Ovary (tissue), 10 donors: ENCODE measurements at regions of chr19 and their contacts with region 1.

Region 1: DNA sequence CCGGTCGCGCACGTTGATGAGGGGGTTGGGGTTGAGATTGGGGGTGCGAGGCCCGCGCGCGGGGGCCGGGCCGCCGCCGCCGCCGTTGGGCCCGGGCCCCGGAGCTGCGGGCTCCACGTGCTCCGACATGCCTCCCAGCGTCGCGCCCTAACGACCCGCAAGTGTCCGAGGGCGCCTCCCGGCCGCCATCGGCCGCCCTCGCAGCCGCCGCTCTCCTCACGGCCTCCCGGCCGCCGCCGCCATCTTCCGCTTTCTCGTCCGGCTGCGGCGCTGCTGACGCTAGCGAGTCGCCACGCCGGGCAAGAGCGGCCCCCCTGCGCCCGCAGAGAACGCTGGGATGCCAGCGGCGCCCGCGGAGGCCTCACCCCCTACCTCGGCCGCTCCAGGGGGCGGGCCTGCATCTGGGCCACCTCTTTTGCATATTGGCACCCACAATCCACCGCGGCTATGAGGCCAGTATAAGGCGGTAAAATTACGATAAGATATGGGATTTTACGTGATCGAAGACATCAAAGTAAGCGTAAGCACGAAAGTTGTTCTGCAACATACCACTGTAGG is at the start of gene TMEM259:
- DNase-seq: peak; percentile 96 to 98 (median 98)
- H3K4me3 ChIP-seq: peak within 1 kb of the TSS; percentile 97
- H3K27ac ChIP-seq: peak within 1 kb of the TSS; percentile 90 to 96
- H3K4me1 ChIP-seq: peaks cover 32% of the 10 kb centered on the region
- H3K27me3 ChIP-seq: no peaks in the 10 kb centered on the region
- CTCF ChIP-seq: no peak
- EP300 ChIP-seq: no peak
- POLR2A ChIP-seq: peak; percentile 42
- total RNA-seq, gene TMEM259: 105 to 196 (median 127) TPM

Region 2: GRCh38 chr19:1094975-1095701 is 74.2 kb after region 1 on chr19 and contains the start of gene POLR2E:
- intact Hi-C with region 1: loop called in 3 of 4 experiments (anchors 5 kb)
- DNase-seq: peak; percentile 99
- H3K4me3 ChIP-seq: peak within 1 kb of the TSS; percentile 77
- H3K27ac ChIP-seq: peak within 1 kb of the TSS in 1 of 2 donors; percentile 58
- H3K4me1 ChIP-seq: peaks cover 12% of the 10 kb centered on the region
- H3K27me3 ChIP-seq: no peaks in the 10 kb centered on the region
- CTCF ChIP-seq: no peak
- EP300 ChIP-seq: no peak
- POLR2A ChIP-seq: peak; percentile 64
- total RNA-seq, gene POLR2E: 88.2 to 157 (median 140) TPM

Region 3: GRCh38 chr19:1103708-1104310 is 82.9 kb after region 1 on chr19 and contains the start of gene GPX4:
- intact Hi-C with region 1: loop called in 3 of 4 experiments (anchors 5 kb)
- DNase-seq: peak; percentile 99
- H3K4me3 ChIP-seq: peak within 1 kb of the TSS; percentile 84
- H3K27ac ChIP-seq: peak within 1 kb of the TSS; percentile 91 to 97
- H3K4me1 ChIP-seq: peaks cover 27% of the 10 kb centered on the region
- H3K27me3 ChIP-seq: no peaks in the 10 kb centered on the region
- CTCF ChIP-seq: no peak
- EP300 ChIP-seq: no peak
- POLR2A ChIP-seq: peak; percentile 78
- total RNA-seq, gene GPX4: 189 to 309 (median 247) TPM

Region 4: DNA sequence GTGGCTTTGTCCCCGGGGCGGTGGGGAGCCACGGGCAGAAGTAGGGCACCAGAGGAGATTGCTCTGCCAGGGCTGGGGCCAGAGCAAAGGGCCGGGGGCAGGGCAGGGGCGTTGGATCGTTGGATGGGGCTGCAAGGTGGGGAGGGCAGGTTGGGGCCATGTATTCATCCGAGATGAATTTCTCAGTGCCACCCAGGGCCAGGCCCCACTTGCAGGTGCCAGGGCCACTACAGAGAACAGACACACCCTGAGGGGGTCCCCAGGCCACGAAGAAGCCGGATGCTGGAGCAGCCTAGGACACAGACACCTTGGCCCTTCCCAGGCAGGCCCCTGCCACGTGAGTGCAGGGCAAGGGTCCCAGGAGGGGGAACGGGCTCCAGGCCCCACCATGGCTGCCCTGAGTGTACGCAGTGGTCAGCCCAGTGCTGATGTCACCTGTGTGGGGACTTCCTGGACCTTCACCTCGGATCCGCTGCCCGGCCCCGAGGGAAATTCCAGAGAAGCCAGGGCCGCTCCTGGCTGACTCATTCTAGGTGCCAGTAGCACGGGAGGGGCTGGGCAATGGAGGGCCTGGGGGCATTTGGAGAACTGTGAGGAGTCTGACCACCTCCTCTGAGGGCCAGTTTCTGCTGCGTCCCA is 162.7 kb after region 1 on chr19:
- intact Hi-C with region 1: loop called in 2 of 4 experiments (anchors 10 kb)
- DNase-seq: peak in 2 of 5 donors; percentile 19 to 35
- H3K4me3 ChIP-seq: no peak overlapping the region
- H3K27ac ChIP-seq: no peak overlapping the region
- H3K4me1 ChIP-seq: no peaks in the 10 kb centered on the region
- H3K27me3 ChIP-seq: no peaks in the 10 kb centered on the region
- CTCF ChIP-seq: no peak
- EP300 ChIP-seq: no peak
- POLR2A ChIP-seq: no peak

Region 5: DNA sequence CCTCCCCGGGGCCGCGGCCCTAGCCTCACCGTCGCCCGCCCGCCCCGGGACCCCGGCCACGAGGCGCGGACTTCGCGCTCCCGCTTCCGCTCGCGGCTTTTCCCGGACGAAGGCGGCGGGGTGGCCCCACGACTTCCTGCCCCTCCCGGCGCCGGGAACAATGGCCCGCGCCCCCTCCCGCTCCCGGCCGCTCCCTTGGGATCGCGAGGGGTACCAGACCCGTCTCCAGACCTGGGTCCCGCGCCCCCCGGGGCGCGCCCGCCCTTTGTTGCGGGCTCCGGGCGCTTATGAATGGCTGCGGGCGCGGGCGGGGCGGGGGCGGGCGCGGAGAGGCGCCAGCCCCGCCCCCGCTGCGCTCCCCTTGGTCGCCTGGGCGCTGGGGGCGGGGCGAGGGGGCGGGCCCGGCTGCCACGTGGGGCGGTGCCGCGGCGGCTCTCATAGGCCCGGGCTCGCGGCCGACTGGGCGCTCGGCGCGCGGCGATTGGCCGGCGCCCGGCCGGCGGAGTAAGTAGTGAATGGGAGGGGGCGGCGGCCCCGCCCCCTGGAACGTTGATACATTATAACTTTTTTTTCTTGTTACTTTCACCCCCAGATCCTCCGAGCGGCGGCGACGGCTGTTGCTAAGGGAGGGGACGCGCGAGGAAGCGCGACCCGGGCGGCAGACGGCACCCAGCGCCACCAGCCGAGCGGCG is 228.5 kb after region 1 on chr19:
- intact Hi-C with region 1: loop called in 1 of 4 experiments (anchors 10 kb)
- DNase-seq: peak; percentile 91 to 96 (median 94)
- H3K4me3 ChIP-seq: peak overlapping the region; percentile 77
- H3K27ac ChIP-seq: peak overlapping the region; percentile 99
- H3K4me1 ChIP-seq: peaks cover 33% of the 10 kb centered on the region
- H3K27me3 ChIP-seq: no peaks in the 10 kb centered on the region
- CTCF ChIP-seq: no peak
- EP300 ChIP-seq: peak; percentile 72
- POLR2A ChIP-seq: peak; percentile 93